ENCODE measurements at regions of chr13 and their contacts with region 1.

Region 1: DNA sequence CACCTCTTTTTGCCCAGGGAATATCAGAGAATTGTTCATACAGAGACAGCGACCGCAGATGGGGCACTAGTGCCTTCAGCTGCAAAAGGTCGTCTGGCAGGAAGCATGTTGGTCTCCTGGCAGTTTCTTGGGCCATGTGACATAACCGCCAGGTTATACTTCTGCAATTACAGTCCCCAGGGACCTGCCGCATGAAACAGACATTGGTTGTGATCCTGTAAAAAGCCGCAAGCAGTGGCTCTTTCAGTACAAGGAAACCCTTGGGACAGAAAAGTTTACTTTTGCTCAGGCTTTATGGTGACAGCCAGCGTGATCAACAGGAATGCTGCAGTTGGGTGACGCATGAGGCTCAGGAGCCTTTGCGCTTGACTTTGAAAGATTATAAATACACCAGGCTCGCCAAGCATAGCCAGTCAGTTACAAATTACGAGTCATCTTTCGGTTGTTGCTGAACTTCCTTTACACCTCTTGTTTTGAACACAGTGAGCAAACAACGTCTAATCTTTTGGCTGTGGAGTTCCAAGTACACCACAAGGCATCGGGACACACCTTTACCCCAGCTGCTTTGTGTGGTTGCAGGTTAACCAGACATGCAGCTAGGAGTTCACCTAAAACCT is 50.5 kb upstream of the UBE2L5 start:
- DNase-seq: peak; percentile 83 to 93 (median 88)
- H3K4me3 ChIP-seq: peak overlapping the region in 1 of 2 donors; percentile 41
- H3K4me3 Mint-ChIP-seq: peak overlapping the region; percentile 66 to 95 (median 87)
- H3K27ac ChIP-seq: peak overlapping the region; percentile 43
- H3K27ac Mint-ChIP-seq: peak overlapping the region; percentile 94 to 99 (median 98)
- H3K4me1 ChIP-seq: peaks cover 90% of the 10 kb centered on the region
- H3K4me1 Mint-ChIP-seq: peaks cover 66 to 92% (median 80%) of the 10 kb centered on the region in 4 donors
- H3K27me3 ChIP-seq: no peaks in the 10 kb centered on the region
- H3K27me3 Mint-ChIP-seq: peaks cover 0 to 3% of the 10 kb centered on the region in 2 donors

Region 2: DNA sequence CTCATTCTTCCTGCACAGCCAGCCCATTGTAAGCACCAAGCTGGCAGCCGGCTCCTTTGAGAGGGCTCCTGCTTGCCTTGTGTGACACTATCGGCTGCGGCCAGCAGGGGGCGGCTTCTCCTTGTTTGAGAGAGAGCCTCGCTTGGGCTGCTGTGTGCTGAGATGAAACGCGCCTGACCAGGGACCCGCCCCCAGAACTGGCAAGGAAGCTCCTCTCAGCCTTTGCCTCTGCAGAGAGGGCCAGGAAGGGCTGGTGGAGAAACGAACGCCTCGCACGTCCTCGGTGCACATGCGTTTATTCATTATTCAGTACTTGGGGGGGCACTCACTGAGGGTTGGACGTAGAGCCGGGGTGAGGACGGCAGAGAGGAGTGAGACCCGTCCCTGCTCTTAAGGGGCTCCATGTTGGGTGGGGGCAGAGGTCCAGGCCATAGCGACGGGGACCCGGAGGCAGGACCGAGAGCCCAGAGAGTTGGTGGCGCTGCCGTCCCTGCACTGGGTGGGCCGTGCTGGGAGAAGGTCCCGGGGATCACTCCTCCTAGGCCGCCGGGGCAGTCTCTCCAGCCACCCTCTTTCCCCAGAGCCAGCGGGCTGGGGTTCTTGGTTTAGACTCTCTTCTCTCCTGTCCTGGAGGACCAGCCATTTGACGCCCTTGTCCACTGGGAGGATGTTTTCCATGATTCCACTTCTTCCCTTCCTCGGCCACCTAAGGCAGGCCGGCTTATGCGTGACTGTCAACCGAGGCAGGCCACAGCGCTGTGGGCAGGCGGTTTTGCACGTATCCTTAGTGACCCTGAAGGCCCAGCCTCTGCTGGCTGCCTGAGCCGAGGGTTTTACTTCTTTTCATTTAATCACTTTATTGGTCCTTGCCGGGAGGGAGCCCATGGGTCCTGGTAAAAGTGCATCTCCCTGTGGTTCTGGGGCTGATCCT is 238.9 kb before region 1 on chr13:
- CTCF ChIA-PET with region 1: interaction called, 15 read pairs
- POLR2A ChIA-PET with region 1: no interaction called
- intact Hi-C with region 1: no loop called
- DNase-seq: peak; percentile 91 to 95 (median 93)
- H3K4me3 ChIP-seq: no peak overlapping the region
- H3K4me3 Mint-ChIP-seq: peak overlapping the region in 6 of 8 donors; percentile 17 to 78 (median 63)
- H3K27ac ChIP-seq: no peak overlapping the region
- H3K27ac Mint-ChIP-seq: peak overlapping the region in 6 of 7 donors; percentile 22 to 88 (median 82)
- H3K4me1 ChIP-seq: peaks cover 12% of the 10 kb centered on the region
- H3K4me1 Mint-ChIP-seq: peaks cover 10 to 19% (median 14%) of the 10 kb centered on the region in 4 donors
- H3K27me3 ChIP-seq: no peaks in the 10 kb centered on the region
- H3K27me3 Mint-ChIP-seq: no peaks in the 10 kb centered on the region

Region 3: DNA sequence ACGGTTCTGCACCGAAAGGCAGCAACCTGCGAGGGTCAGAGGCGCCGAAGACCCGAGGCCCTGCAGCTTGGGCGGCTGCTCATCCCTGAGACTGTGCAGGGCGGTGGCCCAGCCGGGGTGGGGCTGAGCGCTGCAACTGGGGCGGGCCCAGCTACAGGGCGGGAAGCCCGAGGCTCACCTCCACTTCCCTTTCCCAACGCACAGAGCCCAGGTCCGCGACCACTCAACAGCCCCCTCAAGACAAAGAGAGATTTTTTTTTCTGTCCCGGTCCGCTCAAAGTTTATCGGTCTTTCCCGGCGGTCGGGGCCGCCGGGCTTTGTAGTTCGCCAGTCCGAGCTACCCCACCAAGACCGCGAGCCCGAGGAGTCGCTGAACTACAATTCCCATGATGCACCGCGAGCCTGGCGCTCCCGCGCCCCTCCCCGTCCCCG is 65.0 kb before region 1 on chr13:
- CTCF ChIA-PET with region 1: interaction called, 9 read pairs
- POLR2A ChIA-PET with region 1: interaction called, 62 read pairs
- intact Hi-C with region 1: loop called (anchors 1 kb)
- DNase-seq: peak; percentile 88 to 92 (median 89)
- H3K4me3 ChIP-seq: peak overlapping the region; percentile 55 to 79
- H3K4me3 Mint-ChIP-seq: peak overlapping the region; percentile 90 to 93 (median 91)
- H3K27ac ChIP-seq: peak overlapping the region; percentile 68
- H3K27ac Mint-ChIP-seq: peak overlapping the region; percentile 75 to 93 (median 90)
- H3K4me1 ChIP-seq: peaks cover 28% of the 10 kb centered on the region
- H3K4me1 Mint-ChIP-seq: peaks cover 25 to 46% (median 30%) of the 10 kb centered on the region in 4 donors
- H3K27me3 ChIP-seq: no peaks in the 10 kb centered on the region
- H3K27me3 Mint-ChIP-seq: no peaks in the 10 kb centered on the region

Region 4: GRCh38 chr13:30382836-30383525 is 11.2 kb after region 1 on chr13:
- CTCF ChIA-PET with region 1: interaction called, 136 read pairs
- POLR2A ChIA-PET with region 1: interaction called, 401 read pairs
- intact Hi-C with region 1: no loop called
- DNase-seq: no peak
- H3K4me3 ChIP-seq: no peak overlapping the region
- H3K4me3 Mint-ChIP-seq: peak overlapping the region in 7 of 8 donors; percentile 20 to 77 (median 39)
- H3K27ac ChIP-seq: no peak overlapping the region
- H3K27ac Mint-ChIP-seq: peak overlapping the region in 6 of 7 donors; percentile 1 to 85 (median 24)
- H3K4me1 ChIP-seq: peaks cover 34% of the 10 kb centered on the region
- H3K4me1 Mint-ChIP-seq: peaks cover 35 to 48% (median 36%) of the 10 kb centered on the region in 4 donors
- H3K27me3 ChIP-seq: no peaks in the 10 kb centered on the region
- H3K27me3 Mint-ChIP-seq: no peaks in the 10 kb centered on the region

Region 5: DNA sequence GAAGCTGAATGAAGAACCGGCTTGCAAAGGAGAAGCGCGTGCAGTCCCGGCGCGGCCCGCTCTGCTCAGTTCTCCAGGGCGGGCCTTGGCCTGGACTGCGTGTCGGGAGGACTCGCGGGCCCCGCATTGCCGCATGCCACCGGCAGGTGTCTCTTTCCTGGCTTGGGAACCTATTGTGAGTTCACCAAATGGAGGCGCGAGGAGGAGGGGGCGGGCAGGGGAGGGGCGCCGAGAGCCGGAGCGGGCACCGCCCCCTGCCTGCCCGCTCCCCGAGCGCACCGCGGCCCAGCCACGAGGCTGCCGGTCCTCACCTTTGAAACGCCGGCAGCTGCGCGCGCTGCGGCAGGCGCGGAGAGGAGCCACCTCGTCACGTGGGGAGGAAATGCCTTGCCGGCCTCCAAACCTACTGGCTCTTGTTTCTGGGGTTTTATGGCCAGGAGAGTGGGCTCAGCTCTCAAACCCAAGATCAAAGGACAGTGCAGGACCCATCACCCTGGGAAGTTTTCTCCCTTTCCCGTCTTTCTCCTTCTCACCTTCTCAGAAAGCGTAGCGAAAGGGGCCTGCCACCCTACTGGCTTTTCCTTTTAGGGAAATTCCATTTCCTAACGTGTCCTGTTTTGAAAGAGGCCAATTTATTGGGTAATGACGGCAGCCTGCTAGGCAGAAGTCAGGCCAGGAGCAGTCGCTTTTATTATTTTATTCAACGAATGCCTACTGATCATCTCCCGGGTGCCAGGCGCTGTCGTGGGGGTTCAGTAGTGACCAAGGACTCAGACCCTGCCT is 36.8 kb after region 1 on chr13:
- CTCF ChIA-PET with region 1: interaction called, 103 read pairs
- POLR2A ChIA-PET with region 1: interaction called, 76 read pairs
- intact Hi-C with region 1: loop called (anchors 1 kb)
- DNase-seq: peak; percentile 87 to 91 (median 87)
- H3K4me3 ChIP-seq: peak overlapping the region in 1 of 2 donors; percentile 33
- H3K4me3 Mint-ChIP-seq: peak overlapping the region; percentile 46 to 79 (median 68)
- H3K27ac ChIP-seq: peak overlapping the region; percentile 40
- H3K27ac Mint-ChIP-seq: peak overlapping the region; percentile 75 to 91 (median 87)
- H3K4me1 ChIP-seq: peaks cover 14% of the 10 kb centered on the region
- H3K4me1 Mint-ChIP-seq: peaks cover 14 to 52% (median 27%) of the 10 kb centered on the region in 4 donors
- H3K27me3 ChIP-seq: no peaks in the 10 kb centered on the region
- H3K27me3 Mint-ChIP-seq: no peaks in the 10 kb centered on the region

Region 6: DNA sequence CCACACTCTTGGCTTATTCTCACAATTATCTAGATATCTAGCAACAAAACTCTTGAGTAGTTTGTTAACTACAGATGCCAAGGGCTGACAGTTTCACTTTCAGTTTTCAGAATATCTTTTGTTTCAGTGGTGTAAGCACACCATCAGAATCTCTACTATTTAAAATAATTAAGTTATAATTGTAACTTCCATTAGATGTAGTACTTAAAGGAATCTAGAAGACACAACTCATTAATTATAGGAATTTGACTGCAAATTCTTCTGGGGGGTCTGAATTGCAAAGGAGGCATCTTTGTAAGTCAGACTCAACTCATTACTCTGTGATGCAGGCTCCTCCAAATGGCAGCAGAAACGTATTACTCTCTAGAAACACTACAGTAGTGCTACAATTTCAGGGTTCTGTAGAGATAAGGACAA is 201.1 kb after region 1 on chr13:
- CTCF ChIA-PET with region 1: interaction called, 4 read pairs
- POLR2A ChIA-PET with region 1: interaction called, 3 read pairs
- intact Hi-C with region 1: loop called (anchors 10 kb)
- DNase-seq: peak; percentile 33 to 53 (median 43)
- H3K4me3 ChIP-seq: peak overlapping the region; percentile 37 to 64
- H3K4me3 Mint-ChIP-seq: peak overlapping the region; percentile 67 to 88 (median 79)
- H3K27ac ChIP-seq: peak overlapping the region; percentile 62
- H3K27ac Mint-ChIP-seq: peak overlapping the region; percentile 56 to 94 (median 91)
- H3K4me1 ChIP-seq: peaks cover 36% of the 10 kb centered on the region
- H3K4me1 Mint-ChIP-seq: peaks cover 28 to 47% (median 33%) of the 10 kb centered on the region in 4 donors
- H3K27me3 ChIP-seq: no peaks in the 10 kb centered on the region
- H3K27me3 Mint-ChIP-seq: no peaks in the 10 kb centered on the region